ENCODE measurements at regions of chr1 and their contacts with region 1.

Region 1: GRCh38 chr1:173117108-173117633 is 66.4 kb upstream of the TNFSF18 start:
- H3K4me3 Mint-ChIP-seq: no peak overlapping the region
- H3K27ac Mint-ChIP-seq: peak overlapping the region; percentile 73
- H3K4me1 Mint-ChIP-seq: peaks cover 52% of the 10 kb centered on the region
- H3K27me3 Mint-ChIP-seq: no peaks in the 10 kb centered on the region

Region 2: DNA sequence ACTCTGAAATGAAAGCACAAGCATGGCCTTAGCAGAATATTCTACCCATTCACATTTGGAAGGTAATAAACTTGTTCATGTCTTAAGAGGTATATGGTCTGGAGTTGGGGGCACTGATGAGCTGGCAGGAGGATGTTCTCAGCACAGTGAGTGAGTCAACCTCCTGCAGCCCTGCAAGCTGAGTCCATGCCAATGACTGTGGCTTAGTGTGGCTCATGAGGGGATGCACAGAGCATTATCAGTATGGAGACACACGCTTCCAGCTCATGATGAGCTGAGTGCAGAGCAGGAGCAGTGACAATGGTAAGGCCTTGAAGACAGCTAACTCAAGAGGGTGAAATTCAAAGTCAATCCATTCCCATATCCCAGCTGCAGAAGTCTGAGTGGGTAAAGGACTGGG is 168.7 kb before region 1 on chr1:
- intact Hi-C with region 1: loop called (anchors 5 kb)
- H3K4me3 Mint-ChIP-seq: no peak overlapping the region
- H3K27ac Mint-ChIP-seq: no peak overlapping the region
- H3K4me1 Mint-ChIP-seq: peaks cover 21% of the 10 kb centered on the region
- H3K27me3 Mint-ChIP-seq: peaks cover 17% of the 10 kb centered on the region

Region 3: GRCh38 chr1:173050865-173051264 is 66.3 kb before region 1 on chr1 and contains the start of gene TNFSF18:
- intact Hi-C with region 1: loop called (anchors 2 kb)
- H3K4me3 Mint-ChIP-seq: peak within 1 kb of the TSS; percentile 21
- H3K27ac Mint-ChIP-seq: peak within 1 kb of the TSS; percentile 72
- H3K4me1 Mint-ChIP-seq: peaks cover 31% of the 10 kb centered on the region
- H3K27me3 Mint-ChIP-seq: no peaks in the 10 kb centered on the region

Region 4: DNA sequence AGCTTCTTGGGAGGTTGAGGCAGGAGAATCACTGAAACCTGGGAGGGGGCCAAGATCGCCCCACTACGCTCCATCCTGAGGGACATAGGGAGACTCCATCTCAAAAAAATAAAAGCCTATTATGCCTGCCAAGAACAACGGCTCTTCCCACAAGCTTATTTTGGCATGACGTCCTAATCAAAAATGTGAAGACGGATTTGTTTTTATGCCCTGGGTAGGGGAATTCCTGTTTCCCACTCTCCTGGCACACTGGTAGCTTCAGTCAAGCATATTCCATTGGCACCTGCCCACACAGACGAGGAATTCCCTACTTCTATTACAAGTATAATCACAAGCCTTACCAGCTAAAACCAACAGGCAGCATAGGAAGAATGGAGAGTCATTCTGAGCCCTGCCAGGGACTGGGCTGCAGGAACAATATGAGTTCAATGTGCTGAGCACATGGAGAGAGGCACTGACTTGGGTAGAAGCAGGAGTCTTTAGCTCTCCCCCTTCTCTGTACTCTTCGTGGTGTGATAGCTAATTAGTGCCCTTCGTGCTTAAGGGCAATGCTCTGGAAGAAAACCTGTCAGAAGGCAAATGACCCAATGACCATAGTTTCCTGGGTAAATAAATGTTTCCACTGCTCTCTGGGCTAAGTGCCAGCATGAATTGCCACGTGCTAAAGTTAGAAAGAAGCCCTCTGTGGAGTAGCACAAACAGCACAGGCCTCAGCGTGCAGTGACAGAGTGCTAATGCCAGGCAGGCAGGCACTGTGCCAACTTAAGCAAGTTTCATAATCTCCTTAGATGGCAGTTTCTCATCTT is 73.1 kb after region 1 on chr1:
- intact Hi-C with region 1: no loop called
- H3K4me3 Mint-ChIP-seq: no peak overlapping the region
- H3K27ac Mint-ChIP-seq: peak overlapping the region; percentile 15
- H3K4me1 Mint-ChIP-seq: peaks cover 24% of the 10 kb centered on the region
- H3K27me3 Mint-ChIP-seq: no peaks in the 10 kb centered on the region

Measured in dendritic cell treated with granulocyte-macrophage colony-stimulating factor and Interleukin-4, amounts not matched to agents 40 ng/mL and 50 ng/mL, for 4 days (primary cell).